GM23248 (cell line): ENCODE measurements at regions of chr22 and their contacts with region 1.

Region 1: DNA sequence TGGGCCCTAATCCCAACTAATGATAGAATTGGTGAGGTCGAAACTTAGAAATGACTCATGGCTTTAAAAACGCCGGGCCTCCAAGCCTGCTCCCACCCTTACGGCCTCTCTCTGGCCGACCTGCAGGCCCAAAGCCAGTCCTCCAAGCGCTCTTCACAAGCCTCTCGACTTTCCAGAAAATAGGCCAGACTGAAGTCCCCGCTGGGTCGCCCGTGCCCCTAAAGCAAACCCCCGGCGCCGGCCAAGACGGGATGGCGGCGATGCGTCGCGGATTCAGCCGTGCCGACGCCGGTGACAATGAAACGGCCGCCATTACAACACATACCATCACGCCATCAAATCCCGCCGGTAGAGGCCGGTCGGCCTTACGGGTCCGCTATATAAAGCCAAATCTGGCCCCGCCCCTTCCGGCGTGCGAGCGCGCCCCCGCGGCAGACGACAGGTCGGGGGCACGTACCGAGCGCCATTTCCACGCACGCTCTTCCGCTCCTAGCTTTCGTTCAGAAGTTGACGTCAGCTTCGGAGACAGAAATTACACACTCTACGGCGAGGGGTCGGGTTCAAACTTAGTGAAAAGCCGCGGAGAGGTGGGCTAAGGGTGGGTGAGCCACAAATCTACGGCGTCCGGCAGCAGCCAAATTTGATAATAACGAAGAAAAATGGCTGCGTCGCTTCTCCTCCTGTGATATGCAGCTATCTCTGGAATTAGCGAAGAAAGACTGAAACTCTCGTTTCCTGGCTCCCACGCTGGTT is at the start of gene RPL3:
- DNase-seq: peak; percentile 99
- H3K4me3 ChIP-seq: peak within 1 kb of the TSS; percentile 99
- H3K27ac ChIP-seq: peak within 1 kb of the TSS; percentile 97
- H3K4me1 ChIP-seq: peaks cover 23% of the 10 kb centered on the region
- H3K27me3 ChIP-seq: no peaks in the 10 kb centered on the region
- total RNA-seq, gene RPL3: 1,555 and 2,353 TPM in 2 replicates

Region 2: DNA sequence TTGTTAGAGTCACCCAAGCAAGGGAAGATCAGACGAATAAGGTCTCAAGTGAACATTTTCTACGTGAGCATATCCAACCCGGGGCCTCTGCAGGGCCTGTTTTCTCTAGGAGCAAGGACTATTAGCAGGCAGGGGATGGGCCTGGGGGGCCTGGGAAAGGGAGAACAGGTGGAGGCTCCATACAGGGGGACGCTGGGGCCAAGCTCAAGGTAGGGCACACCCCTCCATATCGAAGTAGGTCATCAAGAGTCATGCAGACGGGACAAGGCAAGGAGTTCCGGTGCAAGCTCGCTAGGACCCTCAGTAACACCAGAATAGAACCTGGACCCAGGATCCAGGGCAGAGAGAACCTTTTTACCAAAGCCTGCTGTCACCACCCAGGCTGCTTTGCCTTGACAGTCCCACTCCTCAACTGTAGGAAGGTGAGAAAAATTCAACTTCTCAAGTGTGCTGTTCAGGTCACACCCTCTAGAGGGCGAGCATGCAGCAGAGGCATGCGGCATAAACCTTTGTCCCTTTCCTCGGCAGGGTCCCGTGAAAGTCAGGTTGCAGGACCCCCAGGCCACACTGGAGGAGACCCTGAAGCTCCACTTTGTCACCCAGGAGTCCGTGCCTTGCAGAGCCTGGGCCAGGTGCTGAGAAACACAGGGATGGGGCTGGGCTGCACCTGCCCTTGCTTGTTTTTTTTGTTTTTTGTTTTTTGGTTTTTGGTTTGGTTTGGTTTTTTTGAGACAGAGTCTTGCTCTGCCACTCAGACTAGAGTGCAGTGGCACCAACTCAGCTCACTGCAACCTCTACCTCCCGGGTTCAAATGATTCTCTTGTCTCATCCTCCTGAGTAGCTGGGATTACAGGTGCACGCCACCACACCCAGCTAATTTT is 345.9 kb before region 1 on chr22:
- in situ Hi-C with region 1: no loop called
- DNase-seq: peak; percentile 51
- H3K4me3 ChIP-seq: no peak overlapping the region
- H3K27ac ChIP-seq: no peak overlapping the region
- H3K4me1 ChIP-seq: no peaks in the 10 kb centered on the region
- H3K27me3 ChIP-seq: peaks cover 19% of the 10 kb centered on the region; the same call in 1 of the 2 replicates

Region 3: DNA sequence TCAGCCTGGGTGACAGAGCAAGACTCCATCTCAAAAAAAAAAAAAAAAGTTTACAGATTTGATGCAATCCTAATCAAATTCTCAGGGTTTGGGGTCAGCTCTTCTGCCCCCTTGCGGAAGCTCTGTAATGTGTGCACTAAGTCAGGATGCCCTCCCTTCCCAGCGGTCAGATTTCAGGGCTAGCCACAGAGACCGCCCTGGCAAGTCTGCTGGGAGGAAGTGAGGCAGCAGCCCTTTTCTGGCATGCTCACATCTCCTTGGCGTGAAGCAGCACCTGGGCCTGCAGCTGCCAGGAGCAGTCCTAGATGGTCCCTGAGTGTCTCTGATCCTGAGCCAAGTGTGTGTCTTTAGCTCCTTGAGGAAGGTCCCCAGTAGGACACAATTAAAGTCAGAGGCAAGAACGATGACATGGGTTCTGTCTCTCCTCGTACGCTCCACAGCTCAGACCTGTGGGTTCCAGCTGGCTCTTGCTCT is 316.2 kb before region 1 on chr22:
- in situ Hi-C with region 1: loop called (anchors 25 kb)
- DNase-seq: peak; percentile 88
- H3K4me3 ChIP-seq: no peak overlapping the region
- H3K27ac ChIP-seq: no peak overlapping the region
- H3K4me1 ChIP-seq: no peaks in the 10 kb centered on the region
- H3K27me3 ChIP-seq: peaks cover under 1% of the 10 kb centered on the region; the same call in 1 of the 2 replicates

Region 4: GRCh38 chr22:39197396-39197977 is 122.0 kb before region 1 on chr22:
- in situ Hi-C with region 1: no loop called
- DNase-seq: no peak
- H3K4me3 ChIP-seq: no peak overlapping the region
- H3K27ac ChIP-seq: no peak overlapping the region
- H3K4me1 ChIP-seq: peaks cover under 1% of the 10 kb centered on the region
- H3K27me3 ChIP-seq: no peaks in the 10 kb centered on the region